Activated naive CD4-positive, alpha-beta T cell treated with anti-CD3 and anti-CD28 coated beads for 36 hours (primary cell): ENCODE measurements at regions of chr4 and their contacts with region 1.

Region 1: GRCh38 chr4:142416711-142417275 is 429.3 kb downstream of the INPP4B start:
- DNase-seq: peak; percentile 36
- H3K4me3 Mint-ChIP-seq: peak overlapping the region; percentile 62
- H3K27ac Mint-ChIP-seq: peak overlapping the region; percentile 95
- H3K4me1 Mint-ChIP-seq: peaks cover 66% of the 10 kb centered on the region
- H3K27me3 Mint-ChIP-seq: no peaks in the 10 kb centered on the region

Region 2: GRCh38 chr4:142366769-142367181 is 50.0 kb before region 1 on chr4:
- CTCF ChIA-PET with region 1: no interaction called
- intact Hi-C with region 1: loop called (anchors 2 kb)
- DNase-seq: peak; percentile 48
- H3K4me3 Mint-ChIP-seq: peak overlapping the region; percentile 28
- H3K27ac Mint-ChIP-seq: peak overlapping the region; percentile 85
- H3K4me1 Mint-ChIP-seq: peaks cover 77% of the 10 kb centered on the region
- H3K27me3 Mint-ChIP-seq: no peaks in the 10 kb centered on the region

Region 3: DNA sequence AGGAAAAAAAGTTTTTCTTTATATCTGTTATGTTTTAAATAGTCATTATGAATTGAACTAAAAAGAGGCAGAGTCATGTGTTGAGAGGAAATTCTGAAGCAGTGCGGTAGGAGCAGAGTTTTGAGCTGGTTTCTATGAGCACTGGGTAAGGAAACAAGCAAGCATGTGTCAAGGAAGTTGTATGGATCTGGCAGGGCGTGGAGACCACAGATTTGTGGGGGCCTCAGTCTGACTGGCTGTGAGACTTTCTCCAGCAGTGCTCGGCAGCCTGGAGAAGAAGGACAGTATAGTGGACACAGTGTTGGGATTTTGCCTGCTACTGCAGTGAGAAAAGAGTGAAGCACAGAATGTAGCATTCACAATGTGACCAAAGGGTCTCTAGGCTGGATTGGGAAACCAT is 30.2 kb after region 1 on chr4:
- CTCF ChIA-PET with region 1: interaction called, 6 read pairs
- intact Hi-C with region 1: loop called (anchors 1 kb)
- DNase-seq: peak; percentile 43
- H3K4me3 Mint-ChIP-seq: no peak overlapping the region
- H3K27ac Mint-ChIP-seq: no peak overlapping the region
- H3K4me1 Mint-ChIP-seq: peaks cover 38% of the 10 kb centered on the region
- H3K27me3 Mint-ChIP-seq: no peaks in the 10 kb centered on the region

Region 4: GRCh38 chr4:142549726-142550463 is 133.1 kb after region 1 on chr4:
- CTCF ChIA-PET with region 1: interaction called, 3 read pairs
- intact Hi-C with region 1: loop called (anchors 1 kb)
- DNase-seq: no peak
- H3K4me3 Mint-ChIP-seq: no peak overlapping the region
- H3K27ac Mint-ChIP-seq: peak overlapping the region; percentile 60
- H3K4me1 Mint-ChIP-seq: peaks cover 71% of the 10 kb centered on the region
- H3K27me3 Mint-ChIP-seq: no peaks in the 10 kb centered on the region

Region 5: GRCh38 chr4:143358923-143359643 is 942.3 kb after region 1 on chr4:
- CTCF ChIA-PET with region 1: no interaction called
- intact Hi-C with region 1: loop called (anchors 1 kb)
- DNase-seq: peak; percentile 69
- H3K4me3 Mint-ChIP-seq: peak overlapping the region; percentile 32
- H3K27ac Mint-ChIP-seq: peak overlapping the region; percentile 72
- H3K4me1 Mint-ChIP-seq: peaks cover 21% of the 10 kb centered on the region
- H3K27me3 Mint-ChIP-seq: no peaks in the 10 kb centered on the region